Naive thymus-derived CD4-positive, alpha-beta T cell (primary cell): ENCODE measurements at regions of chr22 and their contacts with region 1.

Region 1: DNA sequence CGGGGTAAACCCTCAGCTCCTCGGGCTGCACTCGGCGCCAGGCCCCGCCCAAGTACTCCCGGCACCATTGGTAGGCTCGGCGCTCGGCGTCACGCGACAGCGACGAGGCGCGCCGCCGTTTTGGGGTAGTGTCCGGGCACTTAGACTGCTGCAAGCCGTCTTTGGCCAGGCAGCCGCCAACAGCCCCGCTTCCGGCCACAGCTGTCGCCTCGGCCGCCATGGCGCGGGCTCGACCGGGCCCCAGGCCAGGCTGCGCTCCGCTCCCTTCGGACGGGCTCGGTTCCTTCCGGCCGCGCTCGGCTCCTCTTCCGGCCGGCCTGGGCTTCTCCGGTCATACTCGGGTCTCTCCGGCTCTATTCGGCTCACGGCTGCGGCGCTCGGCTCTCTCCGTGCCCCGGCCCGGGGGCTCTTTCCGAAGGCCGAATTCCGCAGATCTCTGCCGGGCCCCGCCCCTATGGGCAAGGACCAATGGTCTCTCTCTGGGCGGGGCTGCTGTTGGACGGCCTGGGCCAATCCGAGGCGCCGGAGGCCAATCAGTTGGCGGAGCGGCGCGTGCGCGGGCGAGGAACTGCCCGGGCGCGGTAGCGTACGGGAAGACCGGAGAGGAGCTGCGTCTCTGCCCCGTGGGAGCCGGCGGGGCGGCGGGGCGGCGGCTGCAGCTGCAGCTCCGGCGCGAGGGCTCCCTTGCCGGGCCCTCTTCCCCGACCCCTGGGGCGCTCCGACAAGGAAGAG is at the start of gene CHKB:
- DNase-seq: peak; percentile 95 to 99 (median 99)
- ATAC-seq: peak; percentile 97
- H3K4me3 ChIP-seq: peak within 1 kb of the TSS; percentile 80
- H3K4me3 Mint-ChIP-seq: peak within 1 kb of the TSS; percentile 84 to 97 (median 92)
- H3K27ac ChIP-seq: peak within 1 kb of the TSS; percentile 99
- H3K27ac Mint-ChIP-seq: peak within 1 kb of the TSS; percentile 84 to 96 (median 96)
- H3K4me1 ChIP-seq: peaks cover 16 to 18% of the 10 kb centered on the region in 2 donors
- H3K4me1 Mint-ChIP-seq: peaks cover under 1 to 35% (median 18%) of the 10 kb centered on the region in 7 donors
- H3K27me3 ChIP-seq: no peaks in the 10 kb centered on the region
- H3K27me3 Mint-ChIP-seq: no peaks in the 10 kb centered on the region
- total RNA-seq, gene CHKB: 121 to 214 (median 191) TPM

Region 2: DNA sequence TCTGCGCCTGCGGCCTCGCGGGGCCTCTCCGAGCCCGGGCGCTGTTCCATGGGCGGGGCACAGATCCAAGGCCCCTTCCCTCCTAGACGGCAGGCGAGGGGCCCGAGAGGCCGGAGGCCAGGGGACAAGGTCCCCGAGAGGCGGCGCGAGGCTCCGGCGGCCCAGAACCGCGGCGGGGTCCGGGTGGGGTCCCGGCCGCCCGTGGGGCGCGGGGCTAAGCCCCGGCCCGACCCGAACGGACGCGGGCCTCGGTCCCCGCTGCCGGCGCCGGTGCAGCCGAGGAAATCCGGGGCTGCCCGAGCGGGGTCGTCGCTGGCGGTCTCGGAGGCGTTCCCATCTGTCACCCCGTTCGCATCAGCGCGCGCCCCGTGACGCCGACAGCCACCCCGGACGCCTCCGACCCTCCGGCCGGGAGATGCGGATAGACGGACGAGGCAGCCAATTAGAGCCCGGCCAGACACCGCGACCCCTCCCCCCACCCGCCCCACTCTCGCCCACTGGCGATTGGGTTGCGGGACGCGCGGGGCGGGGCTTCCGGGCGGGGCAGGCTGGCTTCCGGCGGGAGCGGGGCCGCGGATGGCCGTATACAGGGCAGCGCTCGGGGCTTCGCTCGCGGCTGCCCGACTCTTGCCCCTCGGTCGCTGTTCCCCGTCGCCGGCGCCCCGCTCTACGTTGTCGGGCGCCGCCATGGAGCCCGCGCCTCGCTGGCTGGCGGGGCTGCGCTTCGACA is 382.1 kb before region 1 on chr22 and contains the start of gene SELENOO:
- CTCF ChIA-PET with region 1: no interaction called
- POLR2A ChIA-PET with region 1: no interaction called
- intact Hi-C with region 1: loop called in 1 of 2 experiments (anchors 2 kb)
- DNase-seq: peak; percentile 76 to 93 (median 83)
- ATAC-seq: peak; percentile 94
- H3K4me3 ChIP-seq: peak within 1 kb of the TSS; percentile 48
- H3K4me3 Mint-ChIP-seq: peak within 1 kb of the TSS; percentile 74 to 90 (median 82)
- H3K27ac ChIP-seq: peak within 1 kb of the TSS; percentile 93
- H3K27ac Mint-ChIP-seq: peak within 1 kb of the TSS in 7 of 9 donors; percentile 51 to 85 (median 76)
- H3K4me1 ChIP-seq: peaks cover 4 to 15% of the 10 kb centered on the region in 2 donors
- H3K4me1 Mint-ChIP-seq: peaks cover 19 to 33% (median 27%) of the 10 kb centered on the region in 7 donors
- H3K27me3 ChIP-seq: no peaks in the 10 kb centered on the region
- H3K27me3 Mint-ChIP-seq: no peaks in the 10 kb centered on the region
- total RNA-seq, gene SELENOO: 26.7 to 36.6 (median 32.4) TPM

Region 3: DNA sequence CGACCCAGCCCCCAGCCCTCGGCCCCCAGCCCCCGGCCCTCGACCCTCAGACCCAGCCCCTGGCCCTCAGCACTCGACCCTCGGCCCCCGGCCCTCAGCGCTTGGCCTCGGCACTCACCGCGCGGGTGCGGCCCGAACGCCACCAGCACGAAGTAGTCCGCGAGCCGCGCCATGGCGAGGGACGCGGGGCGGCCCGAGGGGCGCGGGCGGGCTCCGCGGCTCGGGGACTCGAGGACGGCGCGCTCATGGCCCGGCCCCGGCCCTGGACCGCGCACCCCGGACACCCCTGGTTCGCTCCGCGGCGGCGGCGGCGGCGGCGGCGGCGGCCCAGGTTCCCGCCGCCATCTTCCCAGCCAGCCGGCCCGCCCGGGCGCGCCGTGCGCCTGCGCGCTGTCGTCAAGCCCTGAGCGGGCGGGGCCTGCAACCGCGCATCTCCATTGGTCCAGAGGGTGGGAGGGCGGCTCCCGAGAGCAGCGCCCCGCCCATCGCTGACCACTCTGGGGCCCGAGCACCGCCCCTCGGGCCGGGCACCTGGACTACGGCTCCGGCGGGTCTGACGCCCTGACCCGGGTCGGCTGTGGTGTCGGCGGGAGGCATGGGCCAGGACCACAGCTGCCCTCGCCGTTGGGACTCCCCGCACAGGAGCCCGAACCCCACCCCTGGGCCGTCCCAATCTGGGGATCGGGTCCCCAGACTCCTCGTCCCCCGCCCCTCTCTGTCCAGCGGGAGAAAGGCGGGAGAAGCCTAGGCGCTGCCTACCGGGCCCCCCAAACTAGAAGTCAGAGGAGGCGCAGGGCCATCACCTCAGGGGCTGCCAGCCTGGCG is 107.8 kb before region 1 on chr22 and contains the start of gene SBF1:
- CTCF ChIA-PET with region 1: no interaction called
- POLR2A ChIA-PET with region 1: no interaction called
- intact Hi-C with region 1: loop called (anchors 1 kb)
- DNase-seq: peak; percentile 75 to 94 (median 85)
- ATAC-seq: peak; percentile 89
- H3K4me3 ChIP-seq: peak within 1 kb of the TSS; percentile 72
- H3K4me3 Mint-ChIP-seq: peak within 1 kb of the TSS; percentile 93 to 100 (median 96)
- H3K27ac ChIP-seq: peak within 1 kb of the TSS; percentile 90
- H3K27ac Mint-ChIP-seq: peak within 1 kb of the TSS; percentile 91 to 97 (median 93)
- H3K4me1 ChIP-seq: peaks cover 39 to 42% of the 10 kb centered on the region in 2 donors
- H3K4me1 Mint-ChIP-seq: peaks cover 29 to 56% (median 47%) of the 10 kb centered on the region in 7 donors
- H3K27me3 ChIP-seq: no peaks in the 10 kb centered on the region
- H3K27me3 Mint-ChIP-seq: peaks cover 0 to 19% (median 0%) of the 10 kb centered on the region in 5 donors
- total RNA-seq, gene SBF1: 161 to 209 (median 181) TPM

Region 4: DNA sequence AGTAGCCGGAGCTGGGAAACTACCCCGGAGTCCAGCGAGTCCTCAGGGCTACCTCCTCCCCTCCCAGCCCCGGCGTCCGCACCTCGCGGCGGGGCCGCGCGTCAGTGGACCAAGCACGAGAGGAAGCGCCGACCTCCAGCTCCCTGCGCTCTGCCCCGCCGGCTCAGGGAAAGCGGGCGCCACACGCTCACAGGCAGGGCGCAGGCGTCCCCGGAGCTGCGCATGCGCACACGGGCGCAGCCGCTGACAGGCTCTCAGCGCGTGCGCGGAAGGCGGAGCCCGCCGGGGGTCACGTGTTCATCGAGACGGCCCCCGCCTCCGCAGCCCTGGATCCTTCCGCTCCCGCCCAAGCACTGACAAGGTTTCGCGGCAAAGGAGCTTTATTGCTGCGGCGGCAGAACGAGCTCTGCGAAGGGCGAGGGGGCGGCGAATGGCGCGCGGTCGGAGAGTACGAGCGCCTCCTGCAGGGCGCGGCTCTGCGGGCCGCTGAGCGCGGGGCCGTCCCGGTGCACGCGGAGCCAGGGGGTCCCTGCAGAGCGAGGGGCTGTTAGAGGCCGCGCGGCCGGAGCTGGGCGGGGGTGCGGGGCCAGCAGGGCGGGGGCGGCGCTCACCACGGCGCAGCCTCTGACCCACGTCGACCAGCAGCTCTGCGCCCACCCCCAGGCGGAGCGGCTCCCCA is 57.2 kb before region 1 on chr22 and contains the start of gene SCO2:
- CTCF ChIA-PET with region 1: interaction called, 3 read pairs
- POLR2A ChIA-PET with region 1: interaction called, 28 read pairs
- intact Hi-C with region 1: loop called (anchors 1 kb)
- DNase-seq: peak; percentile 97 to 99 (median 98)
- ATAC-seq: peak; percentile 77
- H3K4me3 ChIP-seq: peak within 1 kb of the TSS; percentile 77
- H3K4me3 Mint-ChIP-seq: peak within 1 kb of the TSS; percentile 77 to 96 (median 89)
- H3K27ac ChIP-seq: peak within 1 kb of the TSS; percentile 87
- H3K27ac Mint-ChIP-seq: peak within 1 kb of the TSS; percentile 78 to 93 (median 86)
- H3K4me1 ChIP-seq: peaks cover 14 to 21% of the 10 kb centered on the region in 2 donors
- H3K4me1 Mint-ChIP-seq: peaks cover 8 to 33% (median 26%) of the 10 kb centered on the region in 7 donors
- H3K27me3 ChIP-seq: no peaks in the 10 kb centered on the region
- H3K27me3 Mint-ChIP-seq: peaks cover 0 to 6% (median 0%) of the 10 kb centered on the region in 5 donors
- total RNA-seq, gene SCO2: 2.2 to 12.0 (median 5.5) TPM

Region 5: DNA sequence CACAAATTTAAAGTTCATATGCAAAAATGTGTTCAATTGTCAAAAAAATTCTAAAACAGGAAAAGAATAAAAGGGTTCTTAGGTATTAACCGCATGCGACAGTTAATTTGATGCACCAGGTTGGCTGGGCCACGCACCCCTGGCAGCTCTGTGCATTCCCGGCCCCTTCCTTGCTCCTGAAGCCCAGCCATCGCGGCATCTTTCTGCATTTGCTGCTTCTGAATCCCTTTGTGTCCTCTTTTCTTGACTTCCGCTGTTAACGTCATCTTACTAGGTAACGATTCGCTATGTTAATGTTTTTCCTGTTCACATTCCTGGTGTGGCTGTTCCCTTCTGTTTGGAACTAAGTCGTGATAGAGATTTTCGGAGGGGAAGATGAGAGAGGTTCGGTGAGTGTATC is 45.0 kb before region 1 on chr22:
- CTCF ChIA-PET with region 1: no interaction called
- POLR2A ChIA-PET with region 1: interaction called, 10 read pairs
- intact Hi-C with region 1: loop called in 1 of 2 experiments (anchors 2 kb)
- DNase-seq: no peak
- ATAC-seq: no peak
- H3K4me3 ChIP-seq: no peak overlapping the region
- H3K4me3 Mint-ChIP-seq: peak overlapping the region in 4 of 10 donors; percentile 5 to 65 (median 56)
- H3K27ac ChIP-seq: peak overlapping the region; percentile 99
- H3K27ac Mint-ChIP-seq: peak overlapping the region; percentile 74 to 100 (median 99)
- H3K4me1 ChIP-seq: peaks cover 14 to 24% of the 10 kb centered on the region in 2 donors
- H3K4me1 Mint-ChIP-seq: peaks cover 29 to 79% (median 41%) of the 10 kb centered on the region in 7 donors
- H3K27me3 ChIP-seq: no peaks in the 10 kb centered on the region
- H3K27me3 Mint-ChIP-seq: peaks cover 0 to 2% (median 0%) of the 10 kb centered on the region in 5 donors

Region 6: GRCh38 chr22:50562523-50563412 is 20.0 kb before region 1 on chr22 and contains the start of gene SYCE3:
- CTCF ChIA-PET with region 1: interaction called, 5 read pairs
- POLR2A ChIA-PET with region 1: interaction called, 33 read pairs
- intact Hi-C with region 1: loop called (anchors 1 kb)
- DNase-seq: peak; percentile 92 to 99 (median 96)
- ATAC-seq: peak; percentile 100
- H3K4me3 ChIP-seq: peak within 1 kb of the TSS; percentile 75
- H3K4me3 Mint-ChIP-seq: peak within 1 kb of the TSS; percentile 85 to 97 (median 94)
- H3K27ac ChIP-seq: peak within 1 kb of the TSS; percentile 67
- H3K27ac Mint-ChIP-seq: peak within 1 kb of the TSS; percentile 77 to 96 (median 87)
- H3K4me1 ChIP-seq: peaks cover 0 to 4% of the 10 kb centered on the region in 2 donors
- H3K4me1 Mint-ChIP-seq: peaks cover 6 to 24% (median 14%) of the 10 kb centered on the region in 7 donors
- H3K27me3 ChIP-seq: no peaks in the 10 kb centered on the region
- H3K27me3 Mint-ChIP-seq: peaks cover 0 to 14% (median 0%) of the 10 kb centered on the region in 5 donors
- total RNA-seq, gene SYCE3: not detected

Region 7: GRCh38 chr22:50627642-50628542 is 45.2 kb after region 1 on chr22 and contains the start of gene ARSA:
- CTCF ChIA-PET with region 1: no interaction called
- POLR2A ChIA-PET with region 1: interaction called, 3 read pairs
- intact Hi-C with region 1: loop called in 1 of 2 experiments (anchors 2 kb)
- DNase-seq: peak; percentile 63 to 82 (median 77)
- ATAC-seq: peak; percentile 95
- H3K4me3 ChIP-seq: peak within 1 kb of the TSS; percentile 77
- H3K4me3 Mint-ChIP-seq: peak within 1 kb of the TSS; percentile 87 to 99 (median 92)
- H3K27ac ChIP-seq: peak within 1 kb of the TSS; percentile 90
- H3K27ac Mint-ChIP-seq: peak within 1 kb of the TSS; percentile 75 to 98 (median 91)
- H3K4me1 ChIP-seq: peaks cover 15 to 18% of the 10 kb centered on the region in 2 donors
- H3K4me1 Mint-ChIP-seq: peaks cover 19 to 30% (median 23%) of the 10 kb centered on the region in 7 donors
- H3K27me3 ChIP-seq: no peaks in the 10 kb centered on the region
- H3K27me3 Mint-ChIP-seq: no peaks in the 10 kb centered on the region
- total RNA-seq, gene ARSA: 64.3 to 96.3 (median 68.7) TPM

Region 8: DNA sequence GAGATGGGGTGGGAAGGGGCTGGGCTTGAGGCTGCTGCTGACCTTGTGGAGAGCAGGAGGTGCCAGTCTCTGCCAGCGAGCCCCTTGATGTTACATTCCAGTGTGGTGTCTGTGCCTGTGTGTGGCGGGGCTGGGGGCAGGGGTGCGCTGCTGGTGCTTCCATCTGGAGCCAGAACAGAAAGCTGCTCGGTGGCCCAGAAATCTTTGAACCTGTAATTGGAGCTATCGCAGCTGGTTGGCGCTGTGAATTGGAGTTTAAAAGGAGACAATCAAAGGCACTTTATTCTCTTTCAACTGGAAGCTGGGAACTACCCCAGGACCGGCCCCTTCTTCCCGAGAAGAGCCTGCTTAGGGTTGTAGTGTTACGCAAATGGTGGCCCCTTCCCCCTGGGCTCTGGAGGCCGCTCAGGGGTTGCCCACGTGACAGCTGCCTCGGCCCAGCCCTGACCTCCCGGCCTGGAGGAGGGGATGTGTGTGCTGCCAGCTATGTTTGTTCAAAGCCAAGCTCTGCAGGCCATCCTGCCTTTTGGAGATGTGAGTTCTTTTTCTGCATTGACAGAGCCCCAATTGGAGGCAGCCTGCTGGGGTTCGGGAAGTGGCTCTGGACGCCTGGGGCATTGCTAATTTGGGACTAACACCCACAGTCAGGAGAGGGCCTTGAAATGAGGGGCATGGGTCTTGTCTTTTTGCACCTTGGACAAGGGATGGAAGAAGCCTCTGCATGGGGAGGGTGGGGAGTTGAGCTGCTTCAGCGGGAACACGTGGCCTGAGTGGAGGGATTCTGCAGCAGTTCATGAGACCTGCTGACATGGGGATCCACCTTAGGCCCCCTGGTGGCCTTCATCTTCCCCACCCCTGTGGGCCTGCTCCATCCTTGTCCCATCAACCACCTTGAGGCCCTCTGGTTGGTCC is 59.2 kb after region 1 on chr22:
- CTCF ChIA-PET with region 1: no interaction called
- POLR2A ChIA-PET with region 1: no interaction called
- intact Hi-C with region 1: no loop called
- DNase-seq: no peak
- ATAC-seq: no peak
- H3K4me3 ChIP-seq: no peak overlapping the region
- H3K4me3 Mint-ChIP-seq: no peak overlapping the region
- H3K27ac ChIP-seq: no peak overlapping the region
- H3K27ac Mint-ChIP-seq: no peak overlapping the region
- H3K4me1 ChIP-seq: no peaks in the 10 kb centered on the region
- H3K4me1 Mint-ChIP-seq: peaks cover 0 to 4% (median 0%) of the 10 kb centered on the region in 7 donors
- H3K27me3 ChIP-seq: peaks cover 0 to 4% of the 10 kb centered on the region in 2 donors
- H3K27me3 Mint-ChIP-seq: peaks cover 0 to 24% (median 12%) of the 10 kb centered on the region in 5 donors